AG04450 (cell line): ENCODE measurements at regions of chr7 and their contacts with region 1.

Region 1: GRCh38 chr7:48109848-48110663 is 21.0 kb downstream of the UPP1 start:
- DNase-seq: no peak
- H3K4me3 ChIP-seq: no peak overlapping the region
- H3K27ac ChIP-seq: no peak overlapping the region
- H3K27me3 ChIP-seq: no peaks in the 10 kb centered on the region
- CTCF ChIP-seq: peak; percentile 97

Region 2: DNA sequence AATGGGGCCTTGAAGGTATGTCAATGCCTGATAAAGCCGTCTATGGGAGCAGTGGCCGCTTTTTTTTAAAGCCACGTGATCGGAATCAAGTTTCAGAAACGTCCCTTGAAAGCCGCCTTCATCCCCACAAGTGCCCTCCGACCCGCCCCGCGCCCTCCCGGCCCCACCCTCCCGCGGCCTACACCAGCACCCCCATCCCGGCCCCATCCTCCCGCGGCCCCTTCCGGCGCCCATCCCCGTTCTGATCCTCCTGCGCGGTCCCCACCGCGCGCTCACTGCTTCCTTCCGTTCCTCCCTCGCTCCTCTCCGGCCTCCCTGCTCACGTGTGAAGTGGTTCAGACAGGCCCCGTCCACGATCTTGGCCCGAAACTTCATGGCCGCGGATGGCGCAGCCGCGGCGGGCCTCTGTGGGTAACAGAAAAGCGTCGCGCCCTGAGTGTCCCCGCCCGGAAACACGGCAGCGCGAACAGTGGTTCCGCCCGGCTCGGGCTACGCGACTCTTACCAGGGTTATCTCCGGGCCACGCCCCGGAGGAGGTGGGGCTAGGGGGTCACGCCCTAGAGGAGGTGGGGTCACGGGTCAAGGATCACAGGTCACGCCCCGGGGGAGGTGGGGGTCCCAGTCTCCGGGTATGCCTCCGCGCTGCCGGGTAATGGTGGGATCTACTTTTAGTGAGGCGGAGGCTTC is 130.8 kb before region 1 on chr7 and contains the start of gene HUS1:
- CTCF ChIA-PET with region 1: interaction called, 20 read pairs
- POLR2A ChIA-PET with region 1: no interaction called
- DNase-seq: peak; percentile 59
- H3K4me3 ChIP-seq: peak within 1 kb of the TSS; percentile 85
- H3K27ac ChIP-seq: peak within 1 kb of the TSS; percentile 81
- H3K27me3 ChIP-seq: no peaks in the 10 kb centered on the region
- CTCF ChIP-seq: no peak
- polyA plus RNA-seq, gene HUS1: 20.0 and 27.9 TPM in 2 replicates

Region 3: DNA sequence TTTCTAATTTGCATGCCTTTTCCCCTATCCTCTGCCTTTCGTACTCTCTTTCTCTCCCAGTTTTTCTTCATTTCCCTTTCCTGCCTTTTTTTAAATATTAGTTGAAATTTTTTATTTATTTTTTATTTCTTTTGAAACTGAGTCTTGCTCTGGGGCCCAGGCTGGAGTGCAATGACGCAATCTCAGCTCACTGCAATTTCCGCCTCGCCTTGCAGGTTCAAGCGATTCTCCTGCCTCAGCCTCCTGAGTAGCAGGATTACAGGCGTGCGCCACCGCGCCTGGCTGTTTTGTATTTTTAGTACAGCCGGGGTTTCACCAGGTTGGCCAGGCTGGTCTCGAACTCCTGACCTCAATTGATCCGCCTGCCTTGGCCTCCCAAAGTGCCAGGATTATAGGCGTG is 110.6 kb before region 1 on chr7:
- CTCF ChIA-PET with region 1: interaction called, 160 read pairs
- POLR2A ChIA-PET with region 1: no interaction called
- DNase-seq: no peak
- H3K4me3 ChIP-seq: no peak overlapping the region
- H3K27ac ChIP-seq: no peak overlapping the region
- H3K27me3 ChIP-seq: no peaks in the 10 kb centered on the region
- CTCF ChIP-seq: no peak

Region 4: DNA sequence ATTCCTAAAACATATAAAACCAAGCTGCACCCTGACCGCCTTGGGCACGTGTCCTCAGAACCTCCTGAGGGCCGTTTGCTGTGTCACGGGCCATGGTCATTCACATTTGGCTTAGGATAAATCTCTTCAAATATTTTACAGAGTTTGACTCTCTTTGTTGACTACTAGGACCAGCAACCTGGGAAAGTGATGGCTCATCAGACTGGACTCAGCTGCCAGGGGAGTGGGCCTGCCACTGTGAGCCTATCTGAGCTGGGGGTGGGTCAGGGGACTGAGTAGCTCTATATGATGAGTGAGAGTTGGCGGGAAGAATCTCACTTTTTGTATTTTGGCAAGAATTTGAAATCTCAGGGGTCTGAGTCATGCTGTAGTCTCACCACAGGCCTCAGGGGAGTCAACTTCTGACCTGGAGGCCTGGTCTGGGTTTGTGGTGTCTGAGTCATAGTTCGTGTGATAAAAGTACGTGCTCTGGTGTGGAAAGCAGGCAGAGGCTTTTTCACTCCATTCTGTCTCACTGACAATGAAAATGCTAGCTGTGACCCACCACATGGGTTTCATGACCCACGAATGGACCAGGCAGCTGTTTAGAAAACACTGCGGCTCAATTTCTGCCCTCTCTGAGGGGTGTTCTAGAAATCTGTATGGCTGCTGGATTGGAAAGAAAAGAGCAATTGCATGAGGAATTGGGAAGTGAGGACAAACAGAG is 25.2 kb before region 1 on chr7:
- CTCF ChIA-PET with region 1: interaction called, 24 read pairs
- POLR2A ChIA-PET with region 1: no interaction called
- DNase-seq: peak; percentile 88
- H3K4me3 ChIP-seq: no peak overlapping the region
- H3K27ac ChIP-seq: peak overlapping the region; percentile 73
- H3K27me3 ChIP-seq: no peaks in the 10 kb centered on the region
- CTCF ChIP-seq: no peak

Region 5: GRCh38 chr7:48130658-48131108 is 20.6 kb after region 1 on chr7:
- CTCF ChIA-PET with region 1: interaction called, 54 read pairs
- POLR2A ChIA-PET with region 1: no interaction called
- DNase-seq: no peak
- H3K4me3 ChIP-seq: no peak overlapping the region
- H3K27ac ChIP-seq: no peak overlapping the region
- H3K27me3 ChIP-seq: no peaks in the 10 kb centered on the region
- CTCF ChIP-seq: no peak